ENCODE measurements at regions of chrX and their contacts with region 1.

Region 1: GRCh38 chrX:2928191-2928763 is 862 bp downstream of the ARSD start:
- DNase-seq: no peak
- H3K4me3 ChIP-seq: no peak overlapping the region
- H3K27ac ChIP-seq: no peak overlapping the region
- H3K4me1 ChIP-seq: no peaks in the 10 kb centered on the region
- H3K27me3 ChIP-seq: no peaks in the 10 kb centered on the region
- CTCF ChIP-seq: no peak

Region 2: GRCh38 chrX:2898846-2899512 is 29.3 kb before region 1 on chrX:
- CTCF ChIA-PET with region 1: no interaction called
- POLR2A ChIA-PET with region 1: no interaction called
- intact Hi-C with region 1: loop called (anchors 2 kb)
- DNase-seq: peak; percentile 31 to 72
- H3K4me3 ChIP-seq: peak overlapping the region; percentile 46; the same call in 1 of the 2 replicates
- H3K27ac ChIP-seq: peak overlapping the region; percentile 79
- H3K4me1 ChIP-seq: peaks cover 44% of the 10 kb centered on the region
- H3K27me3 ChIP-seq: no peaks in the 10 kb centered on the region
- CTCF ChIP-seq: no peak

Region 3: GRCh38 chrX:4909348-4909747 is 1981.1 kb after region 1 on chrX:
- CTCF ChIA-PET with region 1: no interaction called
- POLR2A ChIA-PET with region 1: interaction called, 11 read pairs
- intact Hi-C with region 1: no loop called
- DNase-seq: no peak
- H3K4me3 ChIP-seq: no peak overlapping the region
- H3K27ac ChIP-seq: no peak overlapping the region
- H3K4me1 ChIP-seq: no peaks in the 10 kb centered on the region
- H3K27me3 ChIP-seq: no peaks in the 10 kb centered on the region
- CTCF ChIP-seq: no peak